ENCODE measurements at regions of chr18 and their contacts with region 1.

Region 1: GRCh38 chr18:59249205-59249774 is 24.0 kb downstream of the RAX start:
- DNase-seq: peak in 1 of 2 experiments; percentile 45
- H3K4me3 ChIP-seq: no peak overlapping the region
- H3K4me3 Mint-ChIP-seq: no peak overlapping the region
- H3K27ac Mint-ChIP-seq: peak overlapping the region; percentile 60
- H3K4me1 ChIP-seq: no peaks in the 10 kb centered on the region
- H3K4me1 Mint-ChIP-seq: peaks cover 5% of the 10 kb centered on the region
- H3K27me3 ChIP-seq: no peaks in the 10 kb centered on the region
- H3K27me3 Mint-ChIP-seq: peaks cover 14% of the 10 kb centered on the region
- CTCF ChIP-seq: peak; percentile 45 to 61

Region 2: DNA sequence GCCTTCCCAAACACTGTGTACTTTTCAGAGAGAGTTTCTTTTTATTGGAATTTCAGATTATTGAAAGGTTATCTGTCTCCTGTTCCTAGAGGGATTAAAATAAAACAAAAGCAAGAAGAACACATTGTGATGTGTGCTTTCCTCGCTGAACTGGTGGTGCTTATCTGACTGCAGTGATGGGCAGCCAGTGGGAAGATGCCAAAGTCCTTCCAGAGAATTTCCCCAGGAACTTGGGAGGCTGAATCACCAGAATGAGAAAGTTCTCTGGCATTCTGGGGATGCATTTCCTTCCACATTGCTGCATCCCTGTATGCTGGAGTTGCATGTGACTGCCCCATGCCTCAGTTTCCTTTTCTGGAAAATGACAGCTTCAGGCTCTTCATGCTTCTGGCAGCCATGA is 163.5 kb before region 1 on chr18:
- CTCF ChIA-PET with region 1: no interaction called
- POLR2A ChIA-PET with region 1: no interaction called
- intact Hi-C with region 1: no loop called
- DNase-seq: no peak
- H3K4me3 ChIP-seq: no peak overlapping the region
- H3K4me3 Mint-ChIP-seq: no peak overlapping the region
- H3K27ac Mint-ChIP-seq: no peak overlapping the region
- H3K4me1 ChIP-seq: no peaks in the 10 kb centered on the region
- H3K4me1 Mint-ChIP-seq: no peaks in the 10 kb centered on the region
- H3K27me3 ChIP-seq: no peaks in the 10 kb centered on the region
- H3K27me3 Mint-ChIP-seq: peaks cover 8% of the 10 kb centered on the region
- CTCF ChIP-seq: no peak

Region 3: DNA sequence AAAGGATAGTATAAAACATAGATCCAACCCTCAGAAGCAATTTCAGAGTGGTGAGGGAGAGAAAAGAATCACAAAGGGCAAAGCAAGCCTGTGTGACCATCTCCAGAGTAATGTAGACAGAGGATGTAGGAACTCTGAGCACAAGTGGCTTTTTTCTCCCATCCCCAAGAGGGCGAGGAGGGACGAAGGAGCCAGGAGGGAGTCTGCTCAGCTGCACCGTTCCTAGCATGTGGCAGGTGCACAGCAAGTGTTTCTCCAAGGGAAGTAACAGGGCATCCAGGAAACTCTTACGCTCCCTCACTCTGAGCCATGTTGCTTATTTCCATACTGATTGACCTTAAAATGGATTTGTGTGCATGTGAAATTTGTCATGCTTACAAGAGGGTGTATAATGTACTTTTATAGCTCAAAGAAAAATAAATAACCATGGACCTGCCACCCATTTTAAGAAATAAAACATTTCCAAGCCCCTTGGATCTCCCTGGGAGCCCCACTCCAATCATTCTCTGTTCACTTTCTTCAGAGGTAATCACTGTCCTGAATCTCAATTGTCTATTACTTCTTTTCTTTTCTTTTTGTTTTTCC is 147.4 kb before region 1 on chr18:
- CTCF ChIA-PET with region 1: no interaction called
- POLR2A ChIA-PET with region 1: no interaction called
- intact Hi-C with region 1: no loop called
- DNase-seq: no peak
- H3K4me3 ChIP-seq: no peak overlapping the region
- H3K4me3 Mint-ChIP-seq: no peak overlapping the region
- H3K27ac Mint-ChIP-seq: no peak overlapping the region
- H3K4me1 ChIP-seq: no peaks in the 10 kb centered on the region
- H3K4me1 Mint-ChIP-seq: no peaks in the 10 kb centered on the region
- H3K27me3 ChIP-seq: no peaks in the 10 kb centered on the region
- H3K27me3 Mint-ChIP-seq: peaks cover 7% of the 10 kb centered on the region
- CTCF ChIP-seq: no peak

Region 4: GRCh38 chr18:59308248-59308937 is 59.1 kb after region 1 on chr18:
- CTCF ChIA-PET with region 1: no interaction called
- POLR2A ChIA-PET with region 1: no interaction called
- intact Hi-C with region 1: loop called (anchors 1 kb)
- DNase-seq: peak; percentile 34 to 73
- H3K4me3 ChIP-seq: peak overlapping the region; percentile 23; the same call in 1 of the 2 replicates
- H3K4me3 Mint-ChIP-seq: no peak overlapping the region
- H3K27ac Mint-ChIP-seq: no peak overlapping the region
- H3K4me1 ChIP-seq: no peaks in the 10 kb centered on the region
- H3K4me1 Mint-ChIP-seq: no peaks in the 10 kb centered on the region
- H3K27me3 ChIP-seq: no peaks in the 10 kb centered on the region
- H3K27me3 Mint-ChIP-seq: peaks cover 15% of the 10 kb centered on the region
- CTCF ChIP-seq: peak; percentile 45 to 67

Region 5: DNA sequence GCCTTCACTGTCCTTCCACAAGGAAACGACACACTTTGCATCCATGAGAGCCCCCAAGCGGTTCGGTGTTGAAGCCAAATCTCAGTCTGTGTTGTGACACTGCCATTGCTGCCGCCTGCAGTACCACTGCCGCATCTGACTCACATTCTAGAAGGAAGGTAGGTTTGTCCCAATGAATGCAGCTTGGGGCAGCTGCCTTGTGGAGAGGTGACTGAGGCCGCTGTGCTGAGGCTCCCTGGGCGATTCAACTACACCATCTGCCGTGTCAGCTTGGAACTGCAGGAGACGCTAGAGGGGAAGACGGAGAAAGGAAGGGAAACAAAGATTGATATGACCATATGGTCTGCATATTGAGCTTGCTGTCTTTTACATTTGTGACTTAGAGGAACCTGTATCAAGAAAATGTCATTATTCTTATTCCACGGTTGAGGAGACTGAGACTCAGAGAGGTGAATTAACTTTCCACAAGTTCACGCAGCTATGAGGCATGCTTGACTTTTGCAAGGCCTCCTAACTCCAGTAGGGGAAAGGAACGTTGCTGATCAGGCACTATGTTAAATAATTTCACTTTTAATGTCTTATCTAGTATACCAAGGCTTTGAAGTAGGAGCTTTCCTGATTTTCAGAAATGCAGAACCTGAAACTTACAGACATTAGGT is 153.3 kb after region 1 on chr18:
- CTCF ChIA-PET with region 1: no interaction called
- POLR2A ChIA-PET with region 1: no interaction called
- intact Hi-C with region 1: loop called (anchors 5 kb)
- DNase-seq: peak; percentile 43 to 58
- H3K4me3 ChIP-seq: no peak overlapping the region
- H3K4me3 Mint-ChIP-seq: no peak overlapping the region
- H3K27ac Mint-ChIP-seq: no peak overlapping the region
- H3K4me1 ChIP-seq: no peaks in the 10 kb centered on the region
- H3K4me1 Mint-ChIP-seq: no peaks in the 10 kb centered on the region
- H3K27me3 ChIP-seq: no peaks in the 10 kb centered on the region
- H3K27me3 Mint-ChIP-seq: no peaks in the 10 kb centered on the region
- CTCF ChIP-seq: peak; percentile 37 to 47